HEK293 (cell line): ENCODE measurements at regions of chr13 and their contacts with region 1.

Region 1: GRCh38 chr13:98672944-98673545 is 79.4 kb downstream of the SLC15A1 start:
- H3K4me3 ChIP-seq: no peak overlapping the region
- H3K27ac ChIP-seq: no peak overlapping the region
- H3K4me1 ChIP-seq: no peaks in the 10 kb centered on the region
- CTCF ChIP-seq: no peak

Region 2: GRCh38 chr13:98445340-98446233 is 227.5 kb before region 1 on chr13:
- CTCF ChIA-PET with region 1: interaction called, 13 read pairs
- POLR2A ChIA-PET with region 1: no interaction called
- H3K4me3 ChIP-seq: no peak overlapping the region
- H3K27ac ChIP-seq: no peak overlapping the region
- H3K4me1 ChIP-seq: no peaks in the 10 kb centered on the region
- CTCF ChIP-seq: no peak; the same call in none of the 2 replicates

Region 3: GRCh38 chr13:98592362-98592732 is 80.7 kb before region 1 on chr13:
- CTCF ChIA-PET with region 1: no interaction called
- POLR2A ChIA-PET with region 1: no interaction called
- H3K4me3 ChIP-seq: no peak overlapping the region
- H3K27ac ChIP-seq: no peak overlapping the region
- H3K4me1 ChIP-seq: no peaks in the 10 kb centered on the region
- CTCF ChIP-seq: no peak

Region 4: DNA sequence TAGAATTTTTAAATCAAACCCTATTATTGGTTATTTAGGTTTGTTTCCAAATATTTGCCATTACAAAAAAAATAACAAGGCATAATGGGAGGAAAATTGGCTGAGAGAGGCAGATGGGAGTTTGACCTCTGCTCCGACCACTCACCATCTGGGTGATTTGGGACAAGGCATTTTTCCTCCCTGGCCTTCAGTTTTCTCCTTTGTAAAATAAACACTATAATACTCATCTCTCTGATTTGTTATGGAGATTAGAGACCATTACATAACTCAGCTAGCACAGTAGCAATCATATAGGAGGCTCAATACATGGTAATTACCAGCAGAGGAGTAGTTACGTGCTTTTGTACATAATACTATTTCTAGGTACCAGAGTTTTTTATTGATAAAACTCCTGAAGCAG is 25.9 kb before region 1 on chr13:
- CTCF ChIA-PET with region 1: no interaction called
- POLR2A ChIA-PET with region 1: no interaction called
- H3K4me3 ChIP-seq: no peak overlapping the region
- H3K27ac ChIP-seq: no peak overlapping the region
- H3K4me1 ChIP-seq: no peaks in the 10 kb centered on the region
- CTCF ChIP-seq: no peak

Region 5: DNA sequence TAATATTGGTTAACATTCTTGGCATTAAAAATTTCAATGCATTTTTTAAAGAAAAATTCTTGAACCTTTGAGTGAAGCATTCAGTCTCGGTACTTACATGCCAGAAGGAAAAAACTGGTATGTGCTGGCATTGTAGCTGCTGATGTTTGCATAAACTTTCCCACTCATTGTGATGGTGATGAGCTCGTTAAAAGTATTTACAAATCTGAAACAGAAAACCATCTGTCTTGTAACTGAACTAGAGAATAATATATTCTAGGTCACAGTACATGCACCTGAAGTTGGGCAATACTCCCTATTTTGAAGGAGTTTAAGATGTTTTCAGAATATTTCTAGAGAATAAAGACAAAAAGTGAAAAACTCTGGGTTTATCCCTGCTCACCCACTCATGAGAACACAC is 15.3 kb after region 1 on chr13:
- CTCF ChIA-PET with region 1: no interaction called
- POLR2A ChIA-PET with region 1: no interaction called
- H3K4me3 ChIP-seq: no peak overlapping the region
- H3K27ac ChIP-seq: no peak overlapping the region
- H3K4me1 ChIP-seq: no peaks in the 10 kb centered on the region
- CTCF ChIP-seq: no peak

Region 6: GRCh38 chr13:98813993-98814392 is 140.9 kb after region 1 on chr13:
- CTCF ChIA-PET with region 1: no interaction called
- POLR2A ChIA-PET with region 1: no interaction called
- H3K4me3 ChIP-seq: no peak overlapping the region
- H3K27ac ChIP-seq: no peak overlapping the region
- H3K4me1 ChIP-seq: no peaks in the 10 kb centered on the region
- CTCF ChIP-seq: no peak